AG04449 (cell line): ENCODE measurements at regions of chr2 and their contacts with region 1.

Region 1: GRCh38 chr2:70258532-70258874 is 566 bp downstream of the PCYOX1 start:
- DNase-seq: no peak
- H3K4me3 ChIP-seq: peak overlapping the region; percentile 82
- CTCF ChIP-seq: no peak

Region 2: GRCh38 chr2:70214953-70215549 is 43.5 kb before region 1 on chr2:
- CTCF ChIA-PET with region 1: no interaction called
- POLR2A ChIA-PET with region 1: no interaction called
- DNase-seq: peak; percentile 82
- H3K4me3 ChIP-seq: no peak overlapping the region
- CTCF ChIP-seq: no peak

Region 3: GRCh38 chr2:70248181-70248847 is 10.2 kb before region 1 on chr2 and contains the start of gene TIA1:
- CTCF ChIA-PET with region 1: no interaction called
- POLR2A ChIA-PET with region 1: interaction called, 11 read pairs
- DNase-seq: peak; percentile 85
- H3K4me3 ChIP-seq: peak within 1 kb of the TSS; percentile 91
- CTCF ChIP-seq: no peak